ENCODE measurements at regions of chr1 and their contacts with region 1.

Region 1: GRCh38 chr1:246767701-246768100 is 43.5 kb downstream of the SCCPDH start:
- DNase-seq: no peak
- H3K4me3 ChIP-seq: no peak overlapping the region
- H3K27ac ChIP-seq: no peak overlapping the region
- H3K4me1 ChIP-seq: no peaks in the 10 kb centered on the region
- H3K27me3 ChIP-seq: no peaks in the 10 kb centered on the region

Region 2: GRCh38 chr1:246043367-246043955 is 724.2 kb before region 1 on chr1:
- CTCF ChIA-PET with region 1: no interaction called
- POLR2A ChIA-PET with region 1: no interaction called
- DNase-seq: no peak
- H3K4me3 ChIP-seq: no peak overlapping the region
- H3K27ac ChIP-seq: no peak overlapping the region
- H3K4me1 ChIP-seq: peaks cover 2 to 8% (median 2%) of the 10 kb centered on the region in 4 experiments
- H3K27me3 ChIP-seq: no peaks in the 10 kb centered on the region

Region 3: GRCh38 chr1:246689409-246690008 is 78.2 kb before region 1 on chr1:
- CTCF ChIA-PET with region 1: interaction called, 11 read pairs
- POLR2A ChIA-PET with region 1: no interaction called
- DNase-seq: peak; percentile 78 to 85 (median 84)
- H3K4me3 ChIP-seq: peak overlapping the region in 4 of 7 experiments; percentile 19 to 71 (median 50)
- H3K27ac ChIP-seq: no peak overlapping the region
- H3K4me1 ChIP-seq: peaks cover 0 to 5% (median 3%) of the 10 kb centered on the region in 4 experiments
- H3K27me3 ChIP-seq: no peaks in the 10 kb centered on the region

Region 4: DNA sequence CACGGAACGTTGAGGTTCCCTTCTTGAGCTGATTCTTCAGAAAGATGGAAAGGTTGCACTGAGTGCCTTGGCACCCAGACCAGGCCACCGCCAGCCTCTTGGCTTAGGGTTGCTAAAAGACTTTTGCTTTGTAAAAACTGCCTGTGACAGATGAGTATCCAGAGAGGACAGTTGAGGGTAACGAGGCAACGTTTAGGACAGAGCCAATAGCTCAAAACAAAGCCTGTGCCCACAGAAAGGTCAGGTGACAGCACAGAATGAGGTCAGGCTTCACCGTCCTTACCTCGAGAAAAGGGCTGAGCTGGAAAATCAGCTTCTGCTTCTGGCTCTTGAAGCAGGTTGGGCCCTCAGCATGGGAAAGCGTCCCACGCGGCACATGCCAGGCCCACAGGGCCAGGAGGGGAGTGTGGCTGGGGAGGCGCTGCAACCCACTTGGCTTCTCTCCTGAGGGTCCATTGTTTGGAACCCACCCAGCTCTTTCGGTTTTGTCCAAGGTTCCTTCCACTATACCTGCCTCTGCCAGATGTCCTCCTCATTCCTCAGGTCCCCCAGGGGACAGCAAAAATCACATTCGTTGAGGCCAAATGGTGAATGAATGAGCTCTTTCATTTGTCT is 12.0 kb after region 1 on chr1:
- CTCF ChIA-PET with region 1: interaction called, 11 read pairs
- POLR2A ChIA-PET with region 1: interaction called, 3 read pairs
- DNase-seq: no peak
- H3K4me3 ChIP-seq: no peak overlapping the region
- H3K27ac ChIP-seq: peak overlapping the region in 1 of 2 experiments; percentile 18
- H3K4me1 ChIP-seq: peaks cover 6 to 56% (median 52%) of the 10 kb centered on the region in 4 experiments
- H3K27me3 ChIP-seq: no peaks in the 10 kb centered on the region

Region 5: GRCh38 chr1:247180581-247180980 is 412.9 kb after region 1 on chr1:
- CTCF ChIA-PET with region 1: no interaction called
- POLR2A ChIA-PET with region 1: no interaction called
- DNase-seq: no peak
- H3K4me3 ChIP-seq: no peak overlapping the region
- H3K27ac ChIP-seq: no peak overlapping the region
- H3K4me1 ChIP-seq: no peaks in the 10 kb centered on the region
- H3K27me3 ChIP-seq: no peaks in the 10 kb centered on the region

Measured in common myeloid progenitor, CD34-positive (primary cell).